T-cell (primary cell): ENCODE measurements at regions of chr12 and their contacts with region 1.

Region 1: GRCh38 chr12:96335270-96335669 is 65.0 kb downstream of the CDK17 start:
- DNase-seq: peak in 1 of 35 experiments; percentile 31
- ATAC-seq: peak; percentile 33 to 81 (median 41)
- H3K4me3 ChIP-seq: no peak overlapping the region
- H3K4me3 Mint-ChIP-seq: peak overlapping the region in 1 of 3 donors; percentile 38
- H3K27ac ChIP-seq: no peak overlapping the region
- H3K27ac Mint-ChIP-seq: peak overlapping the region; percentile 17 to 75
- H3K4me1 ChIP-seq: peaks cover 0 to 21% of the 10 kb centered on the region in 2 experiments
- H3K4me1 Mint-ChIP-seq: peaks cover 53 to 60% (median 57%) of the 10 kb centered on the region in 3 donors
- H3K27me3 ChIP-seq: no peaks in the 10 kb centered on the region
- H3K27me3 Mint-ChIP-seq: no peaks in the 10 kb centered on the region

Region 2: GRCh38 chr12:96347130-96347699 is 11.9 kb after region 1 on chr12:
- CTCF ChIA-PET with region 1: interaction called, 3 read pairs
- POLR2A ChIA-PET with region 1: interaction called, 3 to 11 read pairs
- DNase-seq: no peak
- ATAC-seq: peak in 1 of 4 experiments; percentile 15
- H3K4me3 ChIP-seq: no peak overlapping the region
- H3K4me3 Mint-ChIP-seq: peak overlapping the region; percentile 51 to 62 (median 60)
- H3K27ac ChIP-seq: no peak overlapping the region
- H3K27ac Mint-ChIP-seq: peak overlapping the region; percentile 71 to 84
- H3K4me1 ChIP-seq: peaks cover 5 to 26% of the 10 kb centered on the region in 2 experiments
- H3K4me1 Mint-ChIP-seq: peaks cover 71 to 84% (median 79%) of the 10 kb centered on the region in 3 donors
- H3K27me3 ChIP-seq: no peaks in the 10 kb centered on the region
- H3K27me3 Mint-ChIP-seq: no peaks in the 10 kb centered on the region

Region 3: DNA sequence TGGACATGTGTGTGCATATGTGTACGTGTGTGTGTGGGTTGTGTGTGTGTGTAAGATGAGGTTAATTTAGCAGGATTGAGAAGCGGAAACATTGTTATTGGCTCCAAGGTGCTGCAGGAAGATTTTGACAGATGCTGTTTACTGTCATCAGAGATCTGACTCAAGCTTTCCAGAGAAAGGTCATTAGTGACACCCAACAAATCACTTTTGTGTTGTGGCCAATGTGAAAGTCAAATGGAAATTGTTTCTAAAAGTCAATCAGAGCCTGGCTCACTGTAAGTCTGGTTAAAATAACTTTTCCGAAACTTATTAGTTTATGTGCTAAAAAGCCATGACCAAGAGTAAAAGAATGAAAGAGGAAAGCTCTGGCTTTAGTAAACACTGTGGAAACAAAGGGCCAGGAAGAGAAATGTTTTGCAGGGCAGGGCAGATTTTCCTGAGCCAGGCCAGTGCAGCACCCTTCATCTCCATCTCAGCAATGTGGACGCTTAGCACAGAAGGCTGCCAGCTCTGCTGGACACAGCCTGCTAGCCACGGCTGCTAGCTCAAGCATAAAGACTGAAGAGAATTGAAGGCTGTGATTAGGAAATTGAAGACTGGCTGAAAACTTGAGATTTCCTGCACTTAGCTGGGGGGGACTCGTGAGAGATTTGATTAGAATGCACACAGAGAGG is 807.6 kb after region 1 on chr12:
- CTCF ChIA-PET with region 1: no interaction called
- POLR2A ChIA-PET with region 1: interaction called in 1 of 2 experiments, 13 read pairs
- DNase-seq: no peak
- ATAC-seq: no peak
- H3K4me3 ChIP-seq: no peak overlapping the region
- H3K4me3 Mint-ChIP-seq: no peak overlapping the region
- H3K27ac ChIP-seq: no peak overlapping the region
- H3K27ac Mint-ChIP-seq: no peak overlapping the region
- H3K4me1 ChIP-seq: no peaks in the 10 kb centered on the region
- H3K4me1 Mint-ChIP-seq: no peaks in the 10 kb centered on the region
- H3K27me3 ChIP-seq: no peaks in the 10 kb centered on the region
- H3K27me3 Mint-ChIP-seq: peaks cover 15 to 33% of the 10 kb centered on the region in 2 donors